ENCODE measurements at regions of chr9 and their contacts with region 1.

Region 1: GRCh38 chr9:68704814-68705530 is at the start of gene PIP5K1B:
- DNase-seq: peak; percentile 92
- H3K4me3 ChIP-seq: peak within 1 kb of the TSS; percentile 82
- H3K27ac ChIP-seq: peak within 1 kb of the TSS; percentile 59
- H3K4me1 ChIP-seq: peaks cover 43% of the 10 kb centered on the region
- CTCF ChIP-seq: peak; percentile 23; the same call in 1 of the 2 replicates
- total RNA-seq, gene PIP5K1B: 3.8 and 4.8 TPM in 2 replicates

Region 2: DNA sequence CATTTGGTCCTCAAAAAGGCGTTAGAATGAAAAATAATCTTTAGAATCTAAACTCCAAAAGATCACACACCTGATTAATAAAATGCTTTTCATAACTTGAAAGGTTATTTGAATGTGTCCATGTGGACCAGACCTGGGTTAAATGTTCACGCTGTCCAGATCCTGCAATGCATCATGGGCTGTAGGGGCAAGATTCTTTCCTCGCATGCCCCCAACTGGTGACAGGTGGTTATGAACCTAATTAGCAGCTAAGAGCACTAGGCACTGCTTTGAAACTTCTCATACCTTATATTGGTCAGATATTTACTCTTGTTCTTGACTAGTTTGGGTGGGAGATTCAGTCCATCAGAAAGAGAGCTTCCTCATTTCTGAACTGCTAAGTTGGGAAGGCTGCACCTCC is 19.2 kb before region 1 on chr9:
- CTCF ChIA-PET with region 1: interaction called, 3 read pairs
- POLR2A ChIA-PET with region 1: interaction called, 4 read pairs
- intact Hi-C with region 1: loop called (anchors 2 kb)
- DNase-seq: peak; percentile 85
- H3K4me3 ChIP-seq: no peak overlapping the region
- H3K27ac ChIP-seq: no peak overlapping the region
- H3K4me1 ChIP-seq: peaks cover 39% of the 10 kb centered on the region
- CTCF ChIP-seq: peak; percentile 91

Region 3: GRCh38 chr9:68719842-68720241 is 14.9 kb after region 1 on chr9:
- CTCF ChIA-PET with region 1: no interaction called
- POLR2A ChIA-PET with region 1: no interaction called
- intact Hi-C with region 1: loop called (anchors 1 kb)
- DNase-seq: no peak
- H3K4me3 ChIP-seq: no peak overlapping the region
- H3K27ac ChIP-seq: no peak overlapping the region
- H3K4me1 ChIP-seq: peaks cover 2% of the 10 kb centered on the region
- CTCF ChIP-seq: no peak

Region 4: DNA sequence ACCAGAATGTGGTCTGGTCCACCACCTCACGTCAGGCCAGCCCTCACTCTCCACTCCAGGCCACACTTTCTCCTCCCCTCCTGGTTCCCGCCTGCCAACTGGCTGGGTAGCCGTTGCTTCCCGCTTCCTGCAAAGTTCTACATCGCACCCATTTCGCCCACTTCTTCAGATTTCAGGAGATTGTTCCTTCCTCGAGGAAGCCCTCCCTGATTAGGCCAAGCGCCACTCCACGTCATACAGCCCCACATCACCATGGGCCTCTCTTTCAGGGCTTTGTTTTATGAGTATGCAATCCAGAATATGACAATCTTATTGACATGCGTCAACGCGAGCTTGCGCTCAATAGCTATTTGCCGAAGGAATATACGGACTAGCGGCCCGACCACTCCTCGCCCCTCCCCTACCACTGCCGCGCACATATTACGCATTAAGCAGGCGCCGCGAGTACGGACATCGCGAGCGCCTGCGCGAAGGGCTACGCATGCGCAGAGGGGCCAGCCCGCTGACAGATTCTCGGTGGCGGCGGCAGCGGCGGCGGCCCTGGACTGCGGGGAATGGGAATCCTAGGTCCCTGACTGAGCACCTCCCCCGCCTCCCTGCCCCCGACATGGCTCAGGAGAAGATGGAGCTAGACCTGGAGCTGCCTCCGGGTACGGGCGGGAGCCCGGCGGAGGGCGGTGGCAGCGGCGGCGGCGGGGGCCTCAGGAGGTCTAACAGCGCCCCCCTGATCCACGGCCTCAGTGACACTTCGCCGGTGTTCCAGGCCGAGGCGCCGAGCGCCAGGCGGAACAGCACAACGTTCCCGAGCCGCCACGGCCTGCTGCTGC is 74.8 kb after region 1 on chr9:
- CTCF ChIA-PET with region 1: no interaction called
- POLR2A ChIA-PET with region 1: no interaction called
- intact Hi-C with region 1: loop called (anchors 2 kb)
- DNase-seq: peak; percentile 96
- H3K4me3 ChIP-seq: peak overlapping the region; percentile 85
- H3K27ac ChIP-seq: peak overlapping the region; percentile 70
- H3K4me1 ChIP-seq: peaks cover 41% of the 10 kb centered on the region
- CTCF ChIP-seq: peak; percentile 78

Region 5: DNA sequence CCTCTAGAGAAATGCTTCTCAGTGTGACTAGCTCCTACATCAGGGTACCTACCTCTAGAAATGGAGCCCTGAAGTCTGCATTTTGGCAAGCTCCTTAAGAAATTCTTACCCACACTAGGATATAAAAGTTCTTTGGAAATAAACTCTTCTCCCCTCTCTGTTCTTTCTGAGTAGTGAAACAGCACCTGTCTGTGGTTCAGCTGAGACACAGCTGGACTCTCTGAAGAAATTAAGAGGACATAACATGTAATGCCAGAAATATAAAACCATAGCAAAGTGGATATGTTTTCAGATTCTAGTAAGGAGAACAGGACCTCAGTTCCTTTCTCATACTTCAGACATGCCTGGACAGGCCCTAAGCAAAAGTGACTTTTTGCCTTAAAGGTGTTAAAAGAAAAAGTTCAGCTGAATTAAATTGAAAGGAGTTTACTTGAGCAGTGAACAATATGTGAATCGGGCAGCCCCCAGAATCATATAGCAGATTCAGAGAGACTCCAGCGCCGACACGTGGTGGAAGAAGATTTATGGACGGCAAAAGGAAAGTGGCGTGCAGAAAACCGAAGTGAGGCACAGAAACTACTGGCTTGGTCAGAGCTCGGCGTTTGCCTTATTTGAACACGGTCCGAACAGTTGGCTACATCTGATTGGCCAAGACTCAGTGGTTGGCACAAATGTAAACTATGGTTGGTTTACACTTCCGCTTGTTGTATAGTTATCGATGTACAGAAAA is 244.5 kb after region 1 on chr9:
- CTCF ChIA-PET with region 1: no interaction called
- POLR2A ChIA-PET with region 1: interaction called, 3 read pairs
- intact Hi-C with region 1: loop called (anchors 2 kb)
- DNase-seq: peak; percentile 76
- H3K4me3 ChIP-seq: no peak overlapping the region
- H3K27ac ChIP-seq: peak overlapping the region; percentile 39
- H3K4me1 ChIP-seq: peaks cover 63% of the 10 kb centered on the region
- CTCF ChIP-seq: peak; percentile 78

Region 6: DNA sequence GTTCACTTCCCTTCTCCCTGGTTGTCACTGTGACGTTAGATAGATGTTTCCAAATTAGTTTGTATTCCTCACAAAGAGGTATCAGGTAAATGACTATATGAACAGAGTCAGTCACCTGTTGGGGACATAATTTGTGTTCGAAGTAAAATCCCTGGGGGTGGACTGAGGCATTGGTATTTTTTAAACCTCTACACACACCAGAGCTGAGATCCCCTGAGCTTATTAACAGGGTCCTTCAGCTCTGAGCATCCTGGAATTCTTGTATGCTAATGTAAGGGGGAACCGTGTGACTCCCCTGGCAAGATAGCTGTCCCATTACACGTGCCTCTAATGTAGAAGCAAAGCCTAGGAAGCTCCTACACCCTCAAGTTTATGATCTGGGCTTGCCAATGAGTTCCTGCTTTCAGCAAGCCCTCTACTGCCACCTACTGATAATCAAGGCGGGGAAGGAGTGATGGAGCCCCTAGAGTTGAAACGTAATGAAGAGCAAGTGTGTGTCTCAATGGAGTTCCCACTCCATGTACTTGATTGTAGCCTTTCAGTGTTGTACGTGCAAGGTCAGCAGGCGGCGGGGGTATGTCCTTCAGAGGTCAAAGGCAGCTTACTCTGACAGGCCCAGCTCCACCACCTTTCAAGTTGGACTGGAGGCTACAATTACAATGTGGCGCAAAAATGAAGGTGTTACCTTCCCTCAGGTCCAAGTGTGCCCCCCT is 294.6 kb after region 1 on chr9:
- CTCF ChIA-PET with region 1: no interaction called
- POLR2A ChIA-PET with region 1: interaction called, 3 read pairs
- intact Hi-C with region 1: loop called (anchors 5 kb)
- DNase-seq: peak; percentile 87
- H3K4me3 ChIP-seq: no peak overlapping the region
- H3K27ac ChIP-seq: no peak overlapping the region
- H3K4me1 ChIP-seq: peaks cover 13% of the 10 kb centered on the region
- CTCF ChIP-seq: peak; percentile 95

Measured in OCI-LY7 (cell line).